Gastrocnemius medialis (tissue), 4 donors: ENCODE measurements at regions of chr3 and their contacts with region 1.

Region 1: GRCh38 chr3:102206511-102207031 is 228.2 kb upstream of the ZPLD1 start:
- DNase-seq: peak; percentile 63 to 73
- ATAC-seq: peak; percentile 74 to 77
- H3K4me3 ChIP-seq: no peak overlapping the region
- H3K27ac ChIP-seq: peak overlapping the region; percentile 27 to 49 (median 42)
- H3K4me1 ChIP-seq: peaks cover 0 to 6% of the 10 kb centered on the region in 2 donors
- H3K27me3 ChIP-seq: no peaks in the 10 kb centered on the region
- CTCF ChIP-seq: no peak
- POLR2A ChIP-seq: no peak

Region 2: DNA sequence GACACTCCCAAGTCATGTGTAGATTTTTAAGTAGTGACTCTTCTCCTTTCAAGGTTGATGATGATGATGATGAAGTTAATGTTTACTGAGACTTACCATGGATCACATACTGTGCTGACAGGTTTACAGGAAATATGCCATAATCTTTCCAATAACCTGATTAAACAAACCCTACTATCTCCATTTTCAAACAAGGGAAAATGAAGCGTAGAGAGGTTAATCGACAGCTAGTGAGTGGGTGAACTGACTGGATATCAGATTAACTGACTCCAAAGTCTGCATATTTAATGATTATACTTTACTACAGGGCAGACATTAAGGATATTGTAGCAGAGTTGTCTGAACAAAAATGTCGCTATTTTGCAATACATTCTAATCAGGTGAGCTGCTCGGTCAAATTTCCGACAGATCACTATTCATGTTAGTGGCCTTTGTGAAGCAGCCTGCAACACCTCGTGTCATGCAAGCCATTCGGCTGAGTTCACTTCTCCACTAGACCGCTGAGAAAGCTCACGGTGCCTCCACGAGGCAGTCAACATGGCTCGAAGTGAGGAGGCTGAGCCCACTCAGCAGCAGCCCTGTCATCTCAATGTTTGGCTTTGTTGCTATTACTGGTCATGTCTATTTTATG is 93.0 kb before region 1 on chr3:
- in situ Hi-C with region 1: no loop called
- intact Hi-C with region 1: loop called (anchors 10 kb)
- DNase-seq: no peak
- ATAC-seq: no peak
- H3K4me3 ChIP-seq: no peak overlapping the region
- H3K27ac ChIP-seq: no peak overlapping the region
- H3K4me1 ChIP-seq: no peaks in the 10 kb centered on the region
- H3K27me3 ChIP-seq: no peaks in the 10 kb centered on the region
- CTCF ChIP-seq: no peak
- POLR2A ChIP-seq: no peak